ENCODE measurements at regions of chr5 and their contacts with region 1.

Region 1: GRCh38 chr5:98768160-98769005 is 5.1 kb upstream of the RGMB start:
- DNase-seq: peak; percentile 52
- H3K4me3 Mint-ChIP-seq: peak overlapping the region; percentile 84
- H3K27ac Mint-ChIP-seq: no peak overlapping the region
- H3K4me1 Mint-ChIP-seq: peaks cover 32% of the 10 kb centered on the region
- H3K27me3 Mint-ChIP-seq: peaks cover 32% of the 10 kb centered on the region

Region 2: DNA sequence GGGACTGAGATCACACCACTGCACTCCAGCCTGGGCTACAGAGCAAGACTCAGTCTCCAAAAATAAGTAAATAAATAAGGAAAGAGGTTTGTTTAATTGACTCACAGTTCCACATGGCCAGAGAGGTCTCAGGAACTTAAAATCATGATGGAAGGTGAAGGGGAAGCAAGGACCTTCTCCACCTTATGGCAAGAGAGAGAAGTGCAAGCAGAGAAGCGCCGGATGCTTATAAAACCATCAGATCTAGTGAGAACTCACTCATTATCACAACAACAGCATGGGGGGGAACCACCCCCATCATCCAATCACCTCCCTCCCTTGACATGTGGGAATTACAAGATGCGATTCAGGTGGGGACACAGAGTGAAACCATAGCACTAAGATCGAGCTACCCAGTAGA is 17.7 kb before region 1 on chr5:
- CTCF ChIA-PET with region 1: interaction called, 10 read pairs
- POLR2A ChIA-PET with region 1: no interaction called
- intact Hi-C with region 1: no loop called
- DNase-seq: no peak
- H3K4me3 Mint-ChIP-seq: no peak overlapping the region
- H3K27ac Mint-ChIP-seq: no peak overlapping the region
- H3K4me1 Mint-ChIP-seq: no peaks in the 10 kb centered on the region
- H3K27me3 Mint-ChIP-seq: peaks cover 3% of the 10 kb centered on the region

Region 3: DNA sequence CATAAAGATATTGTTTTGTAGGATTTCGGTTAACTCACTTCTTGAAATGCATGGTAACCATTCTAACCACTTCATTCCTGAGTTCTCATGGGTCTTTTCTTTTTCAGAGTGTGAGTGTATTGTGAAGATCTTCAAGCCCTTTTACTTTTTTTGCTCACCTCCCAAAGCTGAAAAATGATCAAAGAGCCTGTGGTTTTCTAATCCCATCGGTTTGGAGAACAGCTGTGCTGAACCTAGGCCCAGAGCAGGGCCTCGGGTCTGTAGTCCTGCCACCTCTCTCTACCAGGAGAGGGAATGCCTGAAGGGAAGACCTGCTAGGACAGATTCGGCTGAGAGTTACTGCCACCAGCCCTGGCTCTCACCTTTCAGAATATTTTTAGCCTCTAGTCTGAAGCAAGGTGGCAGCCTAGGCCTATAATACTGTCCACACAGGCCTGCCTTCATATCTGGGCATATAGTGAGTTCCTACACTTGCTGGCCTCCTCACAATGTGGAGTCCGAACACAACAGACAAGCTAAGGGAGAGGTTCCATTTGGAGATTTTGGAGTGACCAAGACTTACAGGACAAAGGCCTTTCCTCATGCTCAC is 18.8 kb after region 1 on chr5:
- CTCF ChIA-PET with region 1: interaction called, 36 read pairs
- POLR2A ChIA-PET with region 1: no interaction called
- intact Hi-C with region 1: no loop called
- DNase-seq: no peak
- H3K4me3 Mint-ChIP-seq: no peak overlapping the region
- H3K27ac Mint-ChIP-seq: no peak overlapping the region
- H3K4me1 Mint-ChIP-seq: peaks cover 17% of the 10 kb centered on the region
- H3K27me3 Mint-ChIP-seq: no peaks in the 10 kb centered on the region

Region 4: GRCh38 chr5:98827161-98827560 is 58.8 kb after region 1 on chr5:
- CTCF ChIA-PET with region 1: interaction called, 5 read pairs
- POLR2A ChIA-PET with region 1: no interaction called
- intact Hi-C with region 1: loop called (anchors 1 kb)
- DNase-seq: no peak
- H3K4me3 Mint-ChIP-seq: no peak overlapping the region
- H3K27ac Mint-ChIP-seq: no peak overlapping the region
- H3K4me1 Mint-ChIP-seq: no peaks in the 10 kb centered on the region
- H3K27me3 Mint-ChIP-seq: no peaks in the 10 kb centered on the region